Breast epithelium (tissue), 4 donors: ENCODE measurements at regions of chr5 and their contacts with region 1.

Region 1: GRCh38 chr5:118529361-118530144 is 458.8 kb downstream of the DTWD2 start:
- DNase-seq: no peak
- H3K4me3 ChIP-seq: no peak overlapping the region
- H3K27ac ChIP-seq: no peak overlapping the region
- H3K4me1 ChIP-seq: no peaks in the 10 kb centered on the region
- H3K27me3 ChIP-seq: no peaks in the 10 kb centered on the region
- CTCF ChIP-seq: no peak
- POLR2A ChIP-seq: no peak

Region 2: DNA sequence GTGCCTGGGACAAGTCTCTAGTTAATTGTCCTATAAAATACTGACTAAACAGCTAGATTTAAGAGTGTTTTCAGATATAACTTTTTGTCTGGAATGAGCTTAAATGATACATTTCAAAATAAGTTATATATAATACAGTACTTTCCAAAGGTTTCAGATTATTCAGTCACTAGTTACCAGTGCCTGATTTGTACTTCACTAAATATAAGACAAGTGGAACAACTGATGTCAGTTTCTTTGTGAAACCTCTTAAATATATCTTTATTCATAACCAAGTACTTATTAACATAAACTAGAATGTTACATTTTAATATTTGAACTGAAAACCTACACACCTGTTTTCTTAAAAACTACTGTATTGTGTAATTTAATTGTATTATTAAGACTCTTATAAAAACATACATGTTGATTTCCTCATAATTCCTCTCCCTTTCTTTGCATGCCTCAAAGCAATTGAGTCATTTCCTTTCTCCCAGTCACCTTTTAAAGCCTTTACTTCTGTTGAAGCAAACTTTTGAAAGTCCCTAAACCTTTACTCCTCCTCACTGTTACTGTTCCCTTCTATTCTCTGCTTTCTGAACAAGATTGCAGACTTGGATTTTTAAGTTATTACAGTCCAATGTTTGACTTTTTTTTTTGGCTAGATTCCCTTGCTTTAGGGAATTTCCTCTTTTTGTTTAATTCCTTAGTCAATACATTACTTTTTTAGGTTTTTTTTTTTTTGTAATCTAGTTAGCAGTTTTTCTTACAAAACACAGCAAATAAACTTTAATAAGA is 1946.3 kb before region 1 on chr5:
- intact Hi-C with region 1: loop called (anchors 5 kb)
- DNase-seq: no peak
- H3K4me3 ChIP-seq: no peak overlapping the region
- H3K27ac ChIP-seq: no peak overlapping the region
- H3K4me1 ChIP-seq: no peaks in the 10 kb centered on the region
- H3K27me3 ChIP-seq: no peaks in the 10 kb centered on the region
- CTCF ChIP-seq: no peak
- POLR2A ChIP-seq: no peak

Region 3: GRCh38 chr5:118506217-118506852 is 23.2 kb before region 1 on chr5:
- intact Hi-C with region 1: no loop called
- DNase-seq: no peak
- H3K4me3 ChIP-seq: no peak overlapping the region
- H3K27ac ChIP-seq: no peak overlapping the region
- H3K4me1 ChIP-seq: no peaks in the 10 kb centered on the region
- H3K27me3 ChIP-seq: no peaks in the 10 kb centered on the region
- CTCF ChIP-seq: no peak
- POLR2A ChIP-seq: no peak

Region 4: GRCh38 chr5:118578093-118578492 is 48.5 kb after region 1 on chr5:
- intact Hi-C with region 1: no loop called
- DNase-seq: peak in 1 of 2 donors; percentile 31
- H3K4me3 ChIP-seq: no peak overlapping the region
- H3K27ac ChIP-seq: peak overlapping the region in 1 of 2 donors; percentile 21
- H3K4me1 ChIP-seq: no peaks in the 10 kb centered on the region
- H3K27me3 ChIP-seq: no peaks in the 10 kb centered on the region
- CTCF ChIP-seq: no peak
- POLR2A ChIP-seq: no peak

Region 5: DNA sequence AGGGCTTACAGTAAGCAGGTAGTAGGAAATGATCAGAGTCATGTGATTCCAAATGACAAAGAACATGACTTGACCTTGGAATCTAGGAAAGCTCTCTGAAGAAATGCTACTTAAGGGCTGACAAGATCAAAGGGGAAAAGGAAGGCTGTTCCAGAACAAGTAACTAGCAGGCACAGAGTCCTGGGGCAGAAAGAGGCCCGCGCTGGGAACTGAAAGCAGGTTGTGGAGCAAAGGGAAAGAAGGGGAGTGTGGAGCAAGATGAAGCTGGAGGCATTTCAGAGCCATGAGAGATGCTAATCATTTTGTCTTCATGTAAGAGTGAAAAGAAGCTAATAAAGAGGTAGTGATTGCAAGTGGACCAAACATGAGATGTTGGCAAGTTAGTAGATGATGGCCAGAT is 61.3 kb after region 1 on chr5:
- intact Hi-C with region 1: loop called (anchors 2 kb)
- DNase-seq: no peak
- H3K4me3 ChIP-seq: no peak overlapping the region
- H3K27ac ChIP-seq: no peak overlapping the region
- H3K4me1 ChIP-seq: no peaks in the 10 kb centered on the region
- H3K27me3 ChIP-seq: no peaks in the 10 kb centered on the region
- CTCF ChIP-seq: no peak
- POLR2A ChIP-seq: no peak